Endothelial cell of umbilical vein (primary cell): ENCODE measurements at regions of chr2 and their contacts with region 1.

Region 1: GRCh38 chr2:209614690-209615369 is 156.8 kb upstream of the UNC80 start:
- DNase-seq: no peak
- H3K4me3 ChIP-seq: no peak overlapping the region
- H3K27ac ChIP-seq: no peak overlapping the region
- H3K4me1 ChIP-seq: peaks cover 6% of the 10 kb centered on the region
- H3K27me3 ChIP-seq: no peaks in the 10 kb centered on the region
- CTCF ChIP-seq: no peak
- POLR2A ChIP-seq: no peak

Region 2: DNA sequence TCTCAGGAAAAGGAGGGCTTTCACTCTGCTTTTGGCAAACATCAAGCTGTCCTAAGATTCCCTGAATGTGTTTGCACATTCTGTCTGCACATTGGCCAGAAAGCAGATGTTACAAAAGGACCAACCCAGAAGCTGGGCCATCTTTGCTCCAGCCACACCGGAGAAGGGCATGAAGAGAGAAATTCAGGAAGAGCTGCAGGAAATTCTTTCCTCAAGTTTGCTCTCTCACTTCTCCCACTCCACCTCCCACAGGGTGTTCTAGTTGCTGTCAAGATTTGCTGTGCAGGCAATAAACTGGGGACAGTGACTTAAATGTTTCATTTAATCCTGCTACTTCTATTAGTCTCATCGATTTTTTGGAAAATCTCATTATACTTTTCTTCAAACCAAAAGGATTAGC is 19.1 kb after region 1 on chr2:
- CTCF ChIA-PET with region 1: no interaction called
- POLR2A ChIA-PET with region 1: no interaction called
- dilution Hi-C with region 1: no loop called
- intact Hi-C with region 1: loop called (anchors 1 kb)
- DNase-seq: no peak
- H3K4me3 ChIP-seq: no peak overlapping the region
- H3K27ac ChIP-seq: no peak overlapping the region
- H3K4me1 ChIP-seq: peaks cover 16% of the 10 kb centered on the region
- H3K27me3 ChIP-seq: no peaks in the 10 kb centered on the region
- CTCF ChIP-seq: no peak
- POLR2A ChIP-seq: no peak

Region 3: DNA sequence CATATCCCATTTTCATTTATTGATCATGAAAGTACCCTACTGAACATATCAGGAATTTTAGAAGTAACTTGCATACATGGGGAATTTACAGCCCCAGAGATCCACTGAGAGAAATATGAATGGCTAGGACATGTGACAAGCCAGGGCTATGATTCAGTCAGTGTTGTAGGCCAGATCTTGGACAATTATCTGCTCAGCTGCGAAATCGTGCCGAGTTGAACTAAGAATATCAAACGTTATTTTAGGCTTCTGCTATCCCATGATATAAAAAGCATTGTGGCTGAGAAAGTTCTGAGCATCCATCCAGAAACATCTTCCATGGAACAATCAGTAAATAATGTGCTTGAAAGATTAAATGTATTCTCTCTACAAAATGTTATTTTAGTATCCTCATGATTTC is 71.1 kb after region 1 on chr2:
- CTCF ChIA-PET with region 1: no interaction called
- POLR2A ChIA-PET with region 1: no interaction called
- dilution Hi-C with region 1: no loop called
- intact Hi-C with region 1: no loop called
- DNase-seq: no peak
- H3K4me3 ChIP-seq: no peak overlapping the region
- H3K27ac ChIP-seq: no peak overlapping the region
- H3K4me1 ChIP-seq: no peaks in the 10 kb centered on the region
- H3K27me3 ChIP-seq: no peaks in the 10 kb centered on the region
- CTCF ChIP-seq: no peak
- POLR2A ChIP-seq: no peak